B cell (primary cell): ENCODE measurements at regions of chr3 and their contacts with region 1.

Region 1: DNA sequence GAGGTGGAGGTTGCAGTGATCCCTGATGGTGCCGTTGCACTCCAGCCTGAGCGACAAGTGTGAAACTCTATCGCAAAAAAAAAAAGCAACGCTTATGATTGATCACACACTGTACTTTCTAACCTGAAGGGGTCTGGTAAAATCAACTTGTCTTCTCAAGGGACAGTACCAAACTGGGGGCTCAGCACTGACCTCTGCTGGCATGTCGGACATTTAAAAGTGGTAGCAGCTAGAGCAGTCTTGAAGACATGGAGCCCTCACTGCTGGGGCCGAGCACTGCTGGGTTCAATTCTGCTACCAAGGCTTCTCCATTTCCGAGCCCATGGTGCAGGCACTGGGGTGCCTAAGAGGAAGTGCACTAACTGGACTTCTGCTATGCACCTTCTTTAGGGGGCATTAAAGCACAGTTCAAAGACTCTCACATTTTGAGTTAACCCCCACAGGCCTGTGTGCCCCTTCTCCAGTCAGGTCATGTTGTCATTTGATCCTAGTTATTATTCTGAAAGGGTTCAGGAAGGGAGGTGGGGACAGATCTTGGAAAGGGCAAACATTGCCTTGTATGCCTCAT is 26.4 kb upstream of the LAMP3 start:
- DNase-seq: peak; percentile 52
- ATAC-seq: peak; percentile 49
- H3K4me3 ChIP-seq: no peak overlapping the region
- H3K4me3 Mint-ChIP-seq: no peak overlapping the region
- H3K27ac ChIP-seq: no peak overlapping the region
- H3K27ac Mint-ChIP-seq: no peak overlapping the region
- H3K4me1 ChIP-seq: peaks cover 0 to 2% of the 10 kb centered on the region in 2 donors
- H3K4me1 Mint-ChIP-seq: peaks cover 4% of the 10 kb centered on the region
- H3K27me3 ChIP-seq: peaks cover 0 to 51% (median 14%) of the 10 kb centered on the region in 4 experiments
- H3K27me3 Mint-ChIP-seq: peaks cover 57% of the 10 kb centered on the region
- CTCF ChIP-seq: peak; percentile 15

Region 2: DNA sequence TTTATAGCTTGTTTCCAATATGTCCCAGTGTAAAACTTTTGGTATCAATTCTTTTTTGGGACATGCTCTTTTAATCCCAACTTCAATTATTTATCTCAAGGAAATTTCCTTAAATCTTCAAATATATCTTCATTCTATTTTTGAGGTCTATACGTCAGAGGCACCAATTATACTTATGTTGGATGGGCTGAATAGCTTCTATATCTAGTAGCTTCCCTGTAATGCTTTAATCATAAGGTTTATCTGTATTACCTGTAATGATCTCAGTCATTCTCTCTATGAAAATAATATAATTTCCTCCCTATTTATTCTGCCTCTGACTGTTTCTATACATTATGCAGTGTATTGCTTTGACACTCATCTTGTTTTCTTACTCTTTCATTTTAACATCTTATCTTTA is 59.7 kb before region 1 on chr3:
- CTCF ChIA-PET with region 1: interaction called, 72 read pairs
- POLR2A ChIA-PET with region 1: no interaction called
- intact Hi-C with region 1: no loop called
- DNase-seq: no peak
- ATAC-seq: no peak
- H3K4me3 ChIP-seq: no peak overlapping the region
- H3K4me3 Mint-ChIP-seq: no peak overlapping the region
- H3K27ac ChIP-seq: no peak overlapping the region
- H3K27ac Mint-ChIP-seq: no peak overlapping the region
- H3K4me1 ChIP-seq: no peaks in the 10 kb centered on the region
- H3K4me1 Mint-ChIP-seq: peaks cover 2% of the 10 kb centered on the region
- H3K27me3 ChIP-seq: peaks cover 0 to 21% (median 18%) of the 10 kb centered on the region in 4 experiments
- H3K27me3 Mint-ChIP-seq: peaks cover 34% of the 10 kb centered on the region
- CTCF ChIP-seq: no peak

Region 3: GRCh38 chr3:183148056-183148455 is 40.9 kb before region 1 on chr3:
- CTCF ChIA-PET with region 1: no interaction called
- POLR2A ChIA-PET with region 1: no interaction called
- intact Hi-C with region 1: no loop called
- DNase-seq: no peak
- ATAC-seq: no peak
- H3K4me3 ChIP-seq: no peak overlapping the region
- H3K4me3 Mint-ChIP-seq: no peak overlapping the region
- H3K27ac ChIP-seq: no peak overlapping the region
- H3K27ac Mint-ChIP-seq: no peak overlapping the region
- H3K4me1 ChIP-seq: peaks cover 0 to 3% of the 10 kb centered on the region in 2 donors
- H3K4me1 Mint-ChIP-seq: peaks cover 3% of the 10 kb centered on the region
- H3K27me3 ChIP-seq: peaks cover 2 to 76% (median 62%) of the 10 kb centered on the region in 4 experiments
- H3K27me3 Mint-ChIP-seq: peaks cover 80% of the 10 kb centered on the region
- CTCF ChIP-seq: no peak

Region 4: GRCh38 chr3:183392186-183393034 is 203.4 kb after region 1 on chr3:
- CTCF ChIA-PET with region 1: interaction called, 20 read pairs
- POLR2A ChIA-PET with region 1: no interaction called
- intact Hi-C with region 1: no loop called
- DNase-seq: no peak
- ATAC-seq: no peak
- H3K4me3 ChIP-seq: no peak overlapping the region
- H3K4me3 Mint-ChIP-seq: no peak overlapping the region
- H3K27ac ChIP-seq: no peak overlapping the region
- H3K27ac Mint-ChIP-seq: no peak overlapping the region
- H3K4me1 ChIP-seq: no peaks in the 10 kb centered on the region
- H3K4me1 Mint-ChIP-seq: no peaks in the 10 kb centered on the region
- H3K27me3 ChIP-seq: peaks cover 0 to 8% (median 3%) of the 10 kb centered on the region in 4 experiments
- H3K27me3 Mint-ChIP-seq: peaks cover 33% of the 10 kb centered on the region
- CTCF ChIP-seq: no peak